Activated T-helper 2 cell treated with anti-CD3 and anti-CD28 coated beads, Interferon-gamma antibody, Interleukin-2, Interleukin-4, amounts not matched to agents 10 μg/mL and 5 μg/mL and 100 μg/mL, durations not matched to agents 14 hours and 24 hours and 36 hours (primary cell): ENCODE measurements at regions of chr5 and their contacts with region 1.

Region 1: GRCh38 chr5:89005990-89006389 is 123.0 kb upstream of the MEF2C start:
- DNase-seq: no peak
- H3K4me3 Mint-ChIP-seq: no peak overlapping the region
- H3K27ac Mint-ChIP-seq: no peak overlapping the region
- H3K4me1 Mint-ChIP-seq: peaks cover 19% of the 10 kb centered on the region
- H3K27me3 Mint-ChIP-seq: peaks cover 16% of the 10 kb centered on the region

Region 2: GRCh38 chr5:88729084-88729828 is 276.7 kb before region 1 on chr5:
- intact Hi-C with region 1: no loop called
- DNase-seq: peak; percentile 34
- H3K4me3 Mint-ChIP-seq: no peak overlapping the region
- H3K27ac Mint-ChIP-seq: no peak overlapping the region
- H3K4me1 Mint-ChIP-seq: peaks cover 5% of the 10 kb centered on the region
- H3K27me3 Mint-ChIP-seq: peaks cover 12% of the 10 kb centered on the region

Region 3: GRCh38 chr5:88826646-88827585 is 179.1 kb before region 1 on chr5:
- intact Hi-C with region 1: loop called (anchors 2 kb)
- DNase-seq: no peak
- H3K4me3 Mint-ChIP-seq: no peak overlapping the region
- H3K27ac Mint-ChIP-seq: peak overlapping the region; percentile 68
- H3K4me1 Mint-ChIP-seq: peaks cover 30% of the 10 kb centered on the region
- H3K27me3 Mint-ChIP-seq: peaks cover 29% of the 10 kb centered on the region

Region 4: GRCh38 chr5:88845081-88845697 is 160.8 kb before region 1 on chr5:
- intact Hi-C with region 1: loop called (anchors 1 kb)
- DNase-seq: no peak
- H3K4me3 Mint-ChIP-seq: no peak overlapping the region
- H3K27ac Mint-ChIP-seq: no peak overlapping the region
- H3K4me1 Mint-ChIP-seq: peaks cover 7% of the 10 kb centered on the region
- H3K27me3 Mint-ChIP-seq: peaks cover 26% of the 10 kb centered on the region

Region 5: DNA sequence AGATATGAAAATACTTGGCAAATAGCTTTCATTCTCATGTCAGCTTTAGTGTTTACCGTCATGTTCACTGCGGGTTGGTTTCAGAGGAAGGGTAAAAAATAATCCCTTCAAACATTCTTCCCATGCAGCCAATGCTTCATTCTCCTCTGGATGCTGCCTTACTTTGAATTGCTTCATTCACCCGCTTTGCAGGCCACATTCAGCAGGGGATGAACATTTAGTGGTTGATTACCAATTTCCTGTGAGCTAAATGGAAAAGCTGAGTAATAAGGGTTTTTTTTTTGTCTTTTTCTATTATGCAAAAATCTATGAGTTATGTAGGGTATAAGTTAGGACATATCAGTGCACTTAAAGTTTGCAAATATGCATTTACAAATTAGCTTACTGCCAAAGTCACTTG is 26.7 kb before region 1 on chr5:
- intact Hi-C with region 1: loop called (anchors 1 kb)
- DNase-seq: no peak
- H3K4me3 Mint-ChIP-seq: no peak overlapping the region
- H3K27ac Mint-ChIP-seq: peak overlapping the region; percentile 56
- H3K4me1 Mint-ChIP-seq: peaks cover 17% of the 10 kb centered on the region
- H3K27me3 Mint-ChIP-seq: peaks cover 7% of the 10 kb centered on the region

Region 6: DNA sequence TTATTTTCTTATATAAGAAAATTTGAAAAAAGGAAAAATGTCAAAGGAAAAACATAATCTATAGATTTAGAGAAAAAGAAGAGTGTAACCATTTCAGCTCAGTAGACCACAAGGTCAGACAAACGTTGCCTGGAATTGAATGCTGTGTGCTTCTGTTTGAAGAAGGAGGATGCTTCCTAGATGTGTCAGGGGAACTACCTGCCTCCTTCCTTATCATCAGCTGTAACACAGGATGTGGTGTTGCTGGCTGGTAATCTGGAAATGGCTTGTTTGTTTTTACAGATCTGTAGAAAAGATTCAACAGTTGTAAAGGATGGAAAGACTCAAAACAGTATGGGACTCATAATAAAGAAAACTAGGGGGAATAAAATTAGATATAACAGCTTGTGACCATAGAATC is 37.7 kb after region 1 on chr5:
- intact Hi-C with region 1: loop called (anchors 1 kb)
- DNase-seq: peak; percentile 10
- H3K4me3 Mint-ChIP-seq: no peak overlapping the region
- H3K27ac Mint-ChIP-seq: no peak overlapping the region
- H3K4me1 Mint-ChIP-seq: peaks cover 13% of the 10 kb centered on the region
- H3K27me3 Mint-ChIP-seq: no peaks in the 10 kb centered on the region